Ovary (tissue), 10 donors: ENCODE measurements at regions of chr9 and their contacts with region 1.

Region 1: GRCh38 chr9:91207729-91208418 is 153.8 kb downstream of the AUH start:
- DNase-seq: no peak
- H3K4me3 ChIP-seq: no peak overlapping the region
- H3K27ac ChIP-seq: peak overlapping the region; percentile 31 to 59
- H3K4me1 ChIP-seq: peaks cover 5% of the 10 kb centered on the region
- H3K27me3 ChIP-seq: no peaks in the 10 kb centered on the region
- CTCF ChIP-seq: no peak
- EP300 ChIP-seq: peak; percentile 68
- POLR2A ChIP-seq: no peak

Region 2: GRCh38 chr9:91146391-91147019 is 61.4 kb before region 1 on chr9:
- intact Hi-C with region 1: no loop called
- DNase-seq: no peak
- H3K4me3 ChIP-seq: no peak overlapping the region
- H3K27ac ChIP-seq: no peak overlapping the region
- H3K4me1 ChIP-seq: no peaks in the 10 kb centered on the region
- H3K27me3 ChIP-seq: no peaks in the 10 kb centered on the region
- CTCF ChIP-seq: no peak
- EP300 ChIP-seq: no peak
- POLR2A ChIP-seq: no peak

Region 3: GRCh38 chr9:91298311-91298710 is 90.4 kb after region 1 on chr9:
- intact Hi-C with region 1: loop called in 1 of 4 experiments (anchors 10 kb)
- DNase-seq: no peak
- H3K4me3 ChIP-seq: no peak overlapping the region
- H3K27ac ChIP-seq: no peak overlapping the region
- H3K4me1 ChIP-seq: peaks cover 6% of the 10 kb centered on the region
- H3K27me3 ChIP-seq: no peaks in the 10 kb centered on the region
- CTCF ChIP-seq: no peak
- EP300 ChIP-seq: no peak
- POLR2A ChIP-seq: no peak

Region 4: DNA sequence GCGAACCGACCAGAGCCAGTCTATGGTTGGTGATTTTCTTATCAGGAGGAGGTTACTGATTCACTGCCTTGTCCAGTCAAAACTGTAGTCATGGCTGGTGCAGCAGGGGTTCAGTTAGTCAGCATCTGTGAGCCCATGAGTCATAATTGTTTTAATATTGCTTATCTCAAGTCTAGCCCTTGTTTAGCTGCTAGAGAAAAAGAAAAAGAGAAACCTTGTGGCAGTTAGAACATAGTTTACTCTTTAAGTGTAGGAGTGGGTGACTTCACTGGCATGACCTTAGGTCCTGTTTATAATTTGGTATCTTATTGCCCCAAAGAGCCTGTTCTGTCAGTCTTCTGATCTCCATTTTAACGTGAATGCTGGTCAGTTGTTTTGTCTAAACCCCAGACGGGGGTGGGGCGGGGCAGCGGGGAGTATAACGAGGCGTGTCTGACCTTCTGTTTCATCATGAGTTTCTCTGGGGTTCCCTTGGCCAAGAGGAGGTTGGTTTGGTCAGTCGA is 292.7 kb after region 1 on chr9:
- intact Hi-C with region 1: no loop called
- DNase-seq: peak; percentile 33 to 67 (median 41)
- H3K4me3 ChIP-seq: no peak overlapping the region
- H3K27ac ChIP-seq: no peak overlapping the region
- H3K4me1 ChIP-seq: no peaks in the 10 kb centered on the region
- H3K27me3 ChIP-seq: no peaks in the 10 kb centered on the region
- CTCF ChIP-seq: no peak
- EP300 ChIP-seq: no peak
- POLR2A ChIP-seq: no peak